Activated T-helper 2 cell treated with anti-CD3 and anti-CD28 coated beads, Interferon-gamma antibody, Interleukin-2, Interleukin-4, amounts not matched to agents 10 μg/mL and 5 μg/mL and 100 μg/mL, durations not matched to agents 14 hours and 24 hours and 36 hours (primary cell): ENCODE measurements at regions of chr4 and their contacts with region 1.

Region 1: GRCh38 chr4:81351654-81352445 is 119.9 kb downstream of the RASGEF1B start:
- DNase-seq: peak; percentile 24
- H3K4me3 Mint-ChIP-seq: no peak overlapping the region
- H3K27ac Mint-ChIP-seq: no peak overlapping the region
- H3K4me1 Mint-ChIP-seq: no peaks in the 10 kb centered on the region
- H3K27me3 Mint-ChIP-seq: peaks cover 2% of the 10 kb centered on the region

Region 2: DNA sequence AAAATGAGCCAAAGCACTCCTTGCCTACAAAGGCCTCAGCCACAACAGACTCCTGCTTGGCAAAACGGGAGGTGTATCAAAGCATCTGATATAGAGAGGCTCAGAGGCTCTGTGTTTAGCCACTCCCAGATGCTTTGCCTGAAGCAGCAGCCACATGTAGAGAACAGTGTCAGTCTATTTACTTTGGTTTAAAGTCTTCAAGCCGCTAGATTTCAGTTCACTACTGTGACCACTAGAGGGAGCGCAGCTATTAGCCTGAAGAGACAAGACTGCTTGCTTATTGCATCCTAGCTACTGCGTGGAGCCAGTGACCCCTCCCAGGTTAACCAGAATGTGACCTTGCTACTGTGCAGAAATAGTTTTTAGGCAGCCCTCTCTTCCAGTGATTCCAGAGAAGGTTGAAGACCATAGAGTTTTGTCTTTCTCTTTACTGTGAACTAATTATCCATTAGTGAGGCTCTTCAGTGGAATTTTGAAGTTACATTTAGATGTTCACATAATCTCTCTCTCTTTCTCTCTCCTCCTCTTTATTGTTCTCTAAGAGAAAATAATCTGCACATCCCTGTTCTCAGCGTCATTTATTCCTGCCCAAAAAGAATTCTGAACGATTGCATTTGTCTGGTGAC is 282.0 kb before region 1 on chr4:
- intact Hi-C with region 1: loop called (anchors 1 kb)
- DNase-seq: peak; percentile 29
- H3K4me3 Mint-ChIP-seq: no peak overlapping the region
- H3K27ac Mint-ChIP-seq: no peak overlapping the region
- H3K4me1 Mint-ChIP-seq: no peaks in the 10 kb centered on the region
- H3K27me3 Mint-ChIP-seq: peaks cover 12% of the 10 kb centered on the region